PC-3 (cell line): ENCODE measurements at regions of chr15 and their contacts with region 1.

Region 1: DNA sequence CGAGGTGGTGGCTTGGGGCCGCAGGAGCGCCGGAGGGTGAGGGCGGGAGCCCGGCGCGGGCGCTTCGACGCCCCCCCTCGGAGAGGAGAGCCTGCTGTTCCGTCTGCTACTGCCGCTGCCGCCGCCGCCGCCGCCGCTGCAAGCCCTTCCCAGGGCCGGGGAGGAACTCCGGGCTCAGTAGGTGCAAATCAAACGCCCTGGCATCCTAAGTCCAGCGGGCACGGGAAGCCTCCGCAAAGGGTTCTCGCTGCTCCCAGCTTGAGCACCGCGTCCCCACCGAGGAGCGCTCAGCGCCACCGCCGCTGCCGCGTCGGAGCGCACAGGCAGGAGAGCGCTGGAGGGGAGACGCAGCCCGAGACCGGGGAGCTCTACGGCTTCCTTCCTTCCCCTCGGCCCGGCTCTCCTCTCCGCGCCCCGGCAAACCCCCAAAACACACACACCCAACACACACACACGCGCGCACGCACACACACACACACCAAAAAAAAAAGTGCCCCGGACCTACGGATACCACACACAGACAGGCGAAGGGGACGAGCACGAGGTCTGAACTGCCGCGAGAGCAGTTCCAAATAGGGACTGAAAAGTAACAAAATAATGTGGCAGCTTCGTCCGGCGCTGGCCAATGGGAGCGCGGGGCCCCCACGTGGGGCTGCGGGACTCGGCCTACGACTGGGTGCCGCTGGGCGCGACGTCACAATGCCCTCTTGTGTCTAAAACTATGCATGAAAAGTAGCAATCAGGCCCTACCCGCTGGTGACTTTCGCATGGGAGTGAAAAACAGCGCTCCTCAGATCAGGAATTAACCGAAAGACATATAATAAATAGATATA is at the start of gene TLE3:
- DNase-seq: peak; percentile 98
- ATAC-seq: peak; percentile 42
- H3K4me3 ChIP-seq: peak within 1 kb of the TSS; percentile 98
- H3K27ac ChIP-seq: peak within 1 kb of the TSS; percentile 78
- H3K4me1 ChIP-seq: peaks cover 45% of the 10 kb centered on the region
- H3K27me3 ChIP-seq: no peaks in the 10 kb centered on the region
- CTCF ChIP-seq: peak; percentile 33
- total RNA-seq, gene TLE3: 72.5 and 109 TPM in 2 replicates

Region 2: DNA sequence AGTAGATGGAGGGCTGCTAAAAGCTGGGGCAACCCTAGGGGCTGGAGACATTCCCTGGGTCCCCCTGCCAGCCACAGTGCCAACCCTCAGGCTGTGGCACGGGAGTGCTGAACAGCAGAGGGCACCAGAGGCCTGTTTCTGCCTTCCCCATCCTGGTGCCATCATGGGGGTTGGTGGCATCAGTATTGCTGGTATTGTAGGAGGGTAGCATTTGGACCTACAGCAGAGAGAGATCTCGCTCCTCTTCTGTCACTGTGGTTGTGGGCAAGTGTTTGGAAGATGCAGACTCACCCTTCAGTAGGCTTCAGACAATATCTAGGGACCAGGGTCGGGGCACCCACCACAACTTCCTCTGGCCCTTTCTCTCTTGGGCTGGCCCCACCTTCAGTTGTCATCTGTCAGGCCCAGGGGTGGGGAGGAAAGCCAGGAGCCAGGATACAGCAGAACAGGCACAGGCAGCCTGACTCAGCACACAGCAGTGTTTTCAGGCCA is 521.5 kb before region 1 on chr15:
- CTCF ChIA-PET with region 1: interaction called, 5 read pairs
- POLR2A ChIA-PET with region 1: no interaction called
- intact Hi-C with region 1: loop called (anchors 5 kb)
- DNase-seq: peak; percentile 75
- ATAC-seq: peak; percentile 57
- H3K4me3 ChIP-seq: no peak overlapping the region
- H3K27ac ChIP-seq: peak overlapping the region; percentile 35; the same call in 1 of the 2 replicates
- H3K4me1 ChIP-seq: peaks cover 47% of the 10 kb centered on the region
- H3K27me3 ChIP-seq: no peaks in the 10 kb centered on the region
- CTCF ChIP-seq: peak; percentile 88

Region 3: DNA sequence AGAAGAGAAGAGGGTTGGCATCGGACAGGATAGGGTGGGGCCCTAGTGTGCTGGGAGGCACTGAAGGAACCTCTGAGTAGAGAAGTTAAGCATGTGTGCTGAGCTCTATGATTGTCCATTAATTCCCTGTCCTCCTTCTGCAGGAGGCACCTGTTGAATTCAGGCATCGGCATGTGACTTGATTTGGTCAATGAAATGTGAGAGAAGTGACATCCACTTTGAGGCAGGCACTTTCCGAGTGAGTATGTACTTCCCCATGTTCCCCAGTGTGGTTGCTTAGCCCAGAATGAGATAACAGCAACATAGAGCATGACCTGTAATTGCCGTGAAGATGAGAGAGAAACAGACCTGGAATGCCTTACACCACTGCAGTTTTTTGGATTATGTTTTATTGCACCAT is 420.1 kb before region 1 on chr15:
- CTCF ChIA-PET with region 1: no interaction called
- POLR2A ChIA-PET with region 1: interaction called, 15 read pairs
- intact Hi-C with region 1: no loop called
- DNase-seq: no peak
- ATAC-seq: no peak
- H3K4me3 ChIP-seq: no peak overlapping the region
- H3K27ac ChIP-seq: no peak overlapping the region
- H3K4me1 ChIP-seq: no peaks in the 10 kb centered on the region
- H3K27me3 ChIP-seq: peaks cover 45% of the 10 kb centered on the region
- CTCF ChIP-seq: no peak

Region 4: DNA sequence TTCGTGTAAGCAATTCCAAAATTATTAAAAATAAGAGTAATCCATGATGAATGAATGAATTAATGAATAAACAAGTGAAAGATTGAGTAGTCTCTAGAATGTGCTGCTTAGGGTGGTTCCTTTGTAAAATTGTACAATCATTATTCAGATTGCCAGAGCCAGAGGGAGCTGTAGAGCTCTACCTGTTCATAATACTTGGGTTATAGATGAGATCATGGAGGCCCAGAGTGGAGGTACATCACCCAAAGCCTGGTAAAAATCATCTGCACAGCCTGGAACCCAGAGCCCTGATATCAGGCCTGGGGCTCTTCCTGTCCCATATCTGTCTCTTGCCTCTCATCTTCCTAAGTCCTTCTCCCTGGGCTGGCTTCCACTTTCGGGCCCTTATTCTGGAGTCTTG is 347.8 kb before region 1 on chr15:
- CTCF ChIA-PET with region 1: no interaction called
- POLR2A ChIA-PET with region 1: no interaction called
- intact Hi-C with region 1: no loop called
- DNase-seq: peak; percentile 40
- ATAC-seq: no peak
- H3K4me3 ChIP-seq: no peak overlapping the region
- H3K27ac ChIP-seq: no peak overlapping the region
- H3K4me1 ChIP-seq: no peaks in the 10 kb centered on the region
- H3K27me3 ChIP-seq: peaks cover 5% of the 10 kb centered on the region; the same call in 1 of the 2 replicates
- CTCF ChIP-seq: peak; percentile 55

Region 5: DNA sequence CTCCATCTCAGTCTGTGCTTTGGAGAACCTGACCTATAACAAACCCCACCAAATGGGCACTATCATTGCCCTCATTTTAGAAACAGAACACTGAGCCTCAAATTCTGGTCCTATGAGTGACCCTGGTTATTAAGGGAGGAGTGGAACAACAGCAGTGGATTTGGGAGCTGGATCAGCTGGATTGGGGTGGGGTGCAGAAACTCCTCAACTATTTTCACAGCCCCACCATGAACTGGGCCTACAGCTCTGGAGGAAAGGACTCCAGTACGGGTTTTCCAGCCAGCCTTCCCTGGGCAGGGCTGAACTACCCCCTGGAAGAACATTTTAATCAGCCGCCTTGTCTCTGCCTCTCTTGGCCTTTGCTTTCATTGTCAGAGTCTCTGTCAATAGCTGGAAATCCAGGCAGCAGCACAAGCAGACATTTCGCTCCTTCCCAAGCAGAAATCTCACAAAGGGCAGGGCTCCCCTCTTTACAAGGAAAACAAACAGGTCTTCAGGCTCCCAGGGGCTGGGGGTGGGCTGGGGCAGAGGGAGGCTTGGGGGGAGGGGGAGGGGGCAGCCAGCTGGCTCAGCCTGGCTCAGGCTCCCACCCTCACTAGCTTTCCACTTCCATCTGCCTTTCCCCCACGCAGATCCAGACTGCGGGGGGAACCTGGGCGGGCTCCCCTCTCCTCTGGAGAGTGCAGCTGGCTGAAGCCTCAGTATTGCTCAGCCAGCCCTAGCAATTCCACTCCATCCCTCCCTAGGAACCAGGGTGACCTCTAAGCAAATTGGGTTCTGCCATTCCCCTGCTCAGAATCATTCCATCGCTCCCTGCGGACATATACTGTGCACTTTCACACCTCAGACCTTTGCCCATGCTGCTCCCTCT is 13.9 kb after region 1 on chr15:
- CTCF ChIA-PET with region 1: no interaction called
- POLR2A ChIA-PET with region 1: interaction called, 5 read pairs
- intact Hi-C with region 1: loop called (anchors 1 kb)
- DNase-seq: peak; percentile 61
- ATAC-seq: peak; percentile 81
- H3K4me3 ChIP-seq: no peak overlapping the region
- H3K27ac ChIP-seq: no peak overlapping the region
- H3K4me1 ChIP-seq: peaks cover 6% of the 10 kb centered on the region
- H3K27me3 ChIP-seq: no peaks in the 10 kb centered on the region
- CTCF ChIP-seq: no peak

Region 6: GRCh38 chr15:70505411-70505919 is 407.9 kb after region 1 on chr15:
- CTCF ChIA-PET with region 1: no interaction called
- POLR2A ChIA-PET with region 1: interaction called, 7 read pairs
- intact Hi-C with region 1: loop called (anchors 5 kb)
- DNase-seq: peak; percentile 95
- ATAC-seq: peak; percentile 56
- H3K4me3 ChIP-seq: no peak overlapping the region
- H3K27ac ChIP-seq: peak overlapping the region; percentile 90
- H3K4me1 ChIP-seq: peaks cover 57% of the 10 kb centered on the region
- H3K27me3 ChIP-seq: no peaks in the 10 kb centered on the region
- CTCF ChIP-seq: no peak